Calu3 (cell line): ENCODE measurements at regions of chr2 and their contacts with region 1.

Region 1: DNA sequence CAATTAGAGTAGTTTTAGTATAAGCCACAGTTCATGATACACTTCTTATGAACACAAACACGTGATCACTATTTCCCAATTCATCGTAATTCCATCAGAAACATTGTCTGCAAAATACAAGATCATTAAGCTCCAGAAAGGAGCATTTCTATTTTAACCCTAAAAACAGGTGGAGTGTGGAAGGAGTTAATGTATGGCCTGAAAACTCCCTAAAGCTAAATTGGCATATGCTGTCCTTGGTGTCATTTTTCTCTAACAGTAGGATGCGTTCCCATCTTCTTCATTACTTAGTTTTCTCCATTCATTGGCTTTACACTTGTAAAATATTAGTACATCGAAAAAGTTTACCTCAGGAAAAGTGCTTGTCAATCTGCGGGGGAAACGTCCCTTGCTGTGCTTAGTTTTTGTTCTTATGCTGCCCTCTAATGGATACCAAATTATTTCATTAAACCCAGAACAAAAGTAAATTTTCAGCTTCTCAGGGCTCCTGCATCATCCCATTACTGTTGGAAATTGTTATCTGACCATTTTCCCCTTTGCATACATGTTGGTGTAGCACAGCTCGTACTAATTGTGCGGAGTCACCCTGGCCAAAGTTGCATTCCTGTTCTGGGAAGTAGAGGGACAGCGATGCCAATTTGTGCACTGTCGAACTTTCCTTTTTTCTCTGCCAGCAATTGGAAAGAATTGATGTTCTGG is 153.4 kb downstream of the GPD2 start:
- DNase-seq: peak; percentile 6
- H3K4me3 Mint-ChIP-seq: no peak overlapping the region
- H3K27ac Mint-ChIP-seq: no peak overlapping the region
- H3K4me1 Mint-ChIP-seq: no peaks in the 10 kb centered on the region
- H3K27me3 Mint-ChIP-seq: no peaks in the 10 kb centered on the region
- CTCF ChIP-seq: peak; percentile 28

Region 2: DNA sequence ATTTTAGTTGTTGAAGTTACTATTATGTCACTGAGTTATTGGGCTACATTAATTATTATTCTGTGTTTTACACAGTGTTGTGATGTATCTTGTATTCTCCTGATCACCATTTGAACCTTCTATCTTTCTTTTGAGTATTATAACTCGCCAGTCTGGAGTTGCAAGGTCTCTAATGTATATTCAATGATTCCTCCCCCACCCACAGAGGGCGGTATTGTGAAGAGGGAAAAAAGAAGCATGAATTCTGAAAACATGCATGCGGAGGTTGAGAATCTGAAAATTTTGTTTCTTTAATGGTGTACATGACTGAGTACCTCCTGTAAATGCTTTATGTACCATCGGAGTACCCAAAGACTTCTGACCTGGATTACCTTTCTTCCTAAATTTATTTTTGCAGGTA is 523.6 kb before region 1 on chr2:
- CTCF ChIA-PET with region 1: no interaction called
- intact Hi-C with region 1: loop called (anchors 2 kb)
- DNase-seq: peak; percentile 58
- H3K4me3 Mint-ChIP-seq: no peak overlapping the region
- H3K27ac Mint-ChIP-seq: no peak overlapping the region
- H3K4me1 Mint-ChIP-seq: no peaks in the 10 kb centered on the region
- H3K27me3 Mint-ChIP-seq: no peaks in the 10 kb centered on the region
- CTCF ChIP-seq: peak; percentile 36

Region 3: GRCh38 chr2:156110890-156111289 is 478.6 kb before region 1 on chr2:
- CTCF ChIA-PET with region 1: no interaction called
- intact Hi-C with region 1: loop called (anchors 5 kb)
- DNase-seq: peak; percentile 37
- H3K4me3 Mint-ChIP-seq: no peak overlapping the region
- H3K27ac Mint-ChIP-seq: no peak overlapping the region
- H3K4me1 Mint-ChIP-seq: no peaks in the 10 kb centered on the region
- H3K27me3 Mint-ChIP-seq: no peaks in the 10 kb centered on the region
- CTCF ChIP-seq: no peak

Region 4: GRCh38 chr2:156175957-156176356 is 413.6 kb before region 1 on chr2:
- CTCF ChIA-PET with region 1: no interaction called
- intact Hi-C with region 1: no loop called
- DNase-seq: no peak
- H3K4me3 Mint-ChIP-seq: no peak overlapping the region
- H3K27ac Mint-ChIP-seq: no peak overlapping the region
- H3K4me1 Mint-ChIP-seq: peaks cover 1% of the 10 kb centered on the region
- H3K27me3 Mint-ChIP-seq: no peaks in the 10 kb centered on the region
- CTCF ChIP-seq: no peak

Region 5: DNA sequence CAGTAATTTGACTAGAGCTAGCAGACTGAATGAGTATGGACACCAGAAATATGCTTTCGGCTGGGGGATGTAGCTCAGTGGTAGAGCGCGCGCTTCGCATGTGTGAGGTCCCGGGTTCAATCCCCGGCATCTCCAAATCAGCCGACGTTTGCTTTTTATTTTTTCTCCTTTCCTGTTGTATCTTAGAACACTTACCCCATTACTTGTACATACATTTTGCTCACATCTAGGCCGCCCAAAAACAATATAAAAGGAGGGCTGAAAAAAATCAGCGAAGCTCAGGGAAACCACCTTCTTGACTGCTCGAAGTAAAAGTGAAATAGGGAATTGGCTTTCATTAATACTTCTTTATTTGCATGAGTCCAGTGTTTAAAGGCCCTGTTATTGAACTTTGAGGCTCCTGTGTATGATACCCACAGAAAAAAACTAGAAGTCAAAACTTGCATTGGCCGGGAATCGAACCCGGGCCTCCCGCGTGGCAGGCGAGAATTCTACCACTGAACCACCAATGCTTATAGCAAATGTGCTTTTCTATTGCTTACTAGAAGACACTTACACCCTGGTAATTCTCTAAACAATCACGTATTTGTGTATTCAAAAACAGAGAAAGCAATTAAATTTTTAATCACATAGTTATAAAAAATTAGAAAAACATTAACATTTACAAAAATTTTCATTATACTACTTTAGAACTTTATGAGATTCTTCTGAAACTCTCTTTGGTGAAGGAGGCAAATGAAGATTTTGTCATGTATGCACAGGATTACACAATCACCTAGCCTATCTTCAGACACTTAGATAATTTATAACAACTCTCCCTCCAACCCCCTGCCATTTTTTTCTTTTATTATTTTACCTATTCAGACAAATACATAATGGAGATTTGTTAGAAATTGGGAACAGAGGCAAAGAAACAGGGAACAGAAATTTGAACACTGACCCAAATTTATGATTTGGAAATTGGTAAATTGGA is 188.5 kb before region 1 on chr2:
- CTCF ChIA-PET with region 1: no interaction called
- intact Hi-C with region 1: loop called (anchors 5 kb)
- DNase-seq: peak; percentile 74
- H3K4me3 Mint-ChIP-seq: peak overlapping the region; percentile 95
- H3K27ac Mint-ChIP-seq: peak overlapping the region; percentile 99
- H3K4me1 Mint-ChIP-seq: peaks cover 35% of the 10 kb centered on the region
- H3K27me3 Mint-ChIP-seq: no peaks in the 10 kb centered on the region
- CTCF ChIP-seq: no peak

Region 6: DNA sequence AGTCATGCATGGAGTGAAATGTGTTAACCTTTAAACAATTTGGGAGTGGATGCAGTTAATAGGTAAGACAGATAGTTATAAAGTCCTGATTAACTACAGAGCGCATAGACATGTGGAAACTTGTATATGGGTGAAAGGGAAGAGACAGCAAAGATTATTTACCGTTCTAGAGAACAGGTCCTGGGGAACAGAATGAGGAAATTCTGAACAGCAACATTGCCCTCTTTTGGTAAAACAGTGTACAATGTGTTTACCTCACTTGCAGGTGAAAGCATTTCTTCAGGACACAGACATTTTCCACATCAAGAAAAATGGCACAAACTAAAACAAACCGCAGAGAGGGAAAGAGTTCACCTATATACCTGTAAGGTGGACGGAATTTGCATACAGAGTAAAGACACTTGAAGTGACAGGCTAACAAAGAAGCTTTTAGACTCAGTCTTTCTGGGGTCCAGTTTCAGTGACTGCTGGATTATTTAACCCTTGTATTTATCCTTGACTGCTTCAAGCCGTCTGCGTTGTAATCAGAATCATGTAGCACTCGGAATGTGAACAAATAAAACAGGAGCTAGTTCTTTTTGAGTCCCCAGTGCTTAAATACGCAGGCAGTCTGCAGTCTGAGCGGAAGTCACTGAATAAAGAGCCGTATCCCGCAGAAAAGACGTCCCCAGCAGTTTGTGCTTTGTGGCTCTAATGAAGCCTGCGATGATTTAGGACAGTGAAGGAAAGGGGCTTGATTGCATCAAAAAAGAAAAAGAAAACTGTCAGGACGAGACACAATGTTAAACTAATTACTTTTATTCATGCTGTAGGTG is 303.1 kb after region 1 on chr2:
- CTCF ChIA-PET with region 1: no interaction called
- intact Hi-C with region 1: loop called (anchors 2 kb)
- DNase-seq: peak; percentile 23
- H3K4me3 Mint-ChIP-seq: peak overlapping the region; percentile 67
- H3K27ac Mint-ChIP-seq: peak overlapping the region; percentile 29
- H3K4me1 Mint-ChIP-seq: peaks cover 20% of the 10 kb centered on the region
- H3K27me3 Mint-ChIP-seq: no peaks in the 10 kb centered on the region
- CTCF ChIP-seq: peak; percentile 18